Mammary epithelial cell (primary cell): ENCODE measurements at regions of chr20 and their contacts with region 1.

Region 1: DNA sequence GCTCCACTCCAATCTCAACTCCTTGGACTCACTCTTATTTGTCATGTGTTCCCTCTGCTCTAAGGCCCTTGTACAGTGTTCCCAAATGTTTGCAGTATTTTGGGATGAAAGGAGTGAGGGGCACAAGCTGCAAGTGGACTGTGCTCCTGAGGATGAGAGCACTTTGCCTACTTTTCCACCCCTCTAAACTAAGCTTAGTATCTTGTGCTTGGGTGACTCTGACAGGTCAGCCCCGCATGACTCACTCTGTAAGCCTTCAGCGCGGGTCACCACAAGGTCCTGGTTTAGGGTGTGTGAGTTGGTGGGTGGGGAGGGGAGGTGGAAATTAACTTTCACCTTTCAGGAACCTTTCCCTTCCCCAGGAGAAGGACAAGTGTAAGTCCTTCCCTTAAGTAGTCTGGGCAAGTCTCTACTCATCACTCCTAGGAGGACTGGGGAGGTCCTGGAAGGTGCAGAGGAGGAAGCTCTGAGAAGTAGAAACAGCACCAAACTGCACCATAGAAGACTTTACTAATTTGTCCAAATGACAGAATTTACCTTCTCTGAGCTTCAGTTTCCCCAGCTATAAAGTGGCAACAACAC is 68.8 kb upstream of the EPB41L1 start:
- DNase-seq: peak; percentile 92
- H3K4me3 ChIP-seq: peak overlapping the region in 1 of 3 experiments; percentile 16
- H3K27ac ChIP-seq: peak overlapping the region; percentile 92
- H3K4me1 ChIP-seq: peaks cover 40% of the 10 kb centered on the region
- H3K27me3 ChIP-seq: no peaks in the 10 kb centered on the region
- CTCF ChIP-seq: no peak

Region 2: GRCh38 chr20:35981969-35982368 is 103.8 kb before region 1 on chr20:
- CTCF ChIA-PET with region 1: no interaction called
- dilution Hi-C with region 1: loop called (anchors 5 kb)
- in situ Hi-C with region 1: no loop called
- intact Hi-C with region 1: no loop called
- DNase-seq: no peak
- H3K4me3 ChIP-seq: no peak overlapping the region
- H3K27ac ChIP-seq: no peak overlapping the region
- H3K4me1 ChIP-seq: no peaks in the 10 kb centered on the region
- H3K27me3 ChIP-seq: no peaks in the 10 kb centered on the region
- CTCF ChIP-seq: no peak

Region 3: DNA sequence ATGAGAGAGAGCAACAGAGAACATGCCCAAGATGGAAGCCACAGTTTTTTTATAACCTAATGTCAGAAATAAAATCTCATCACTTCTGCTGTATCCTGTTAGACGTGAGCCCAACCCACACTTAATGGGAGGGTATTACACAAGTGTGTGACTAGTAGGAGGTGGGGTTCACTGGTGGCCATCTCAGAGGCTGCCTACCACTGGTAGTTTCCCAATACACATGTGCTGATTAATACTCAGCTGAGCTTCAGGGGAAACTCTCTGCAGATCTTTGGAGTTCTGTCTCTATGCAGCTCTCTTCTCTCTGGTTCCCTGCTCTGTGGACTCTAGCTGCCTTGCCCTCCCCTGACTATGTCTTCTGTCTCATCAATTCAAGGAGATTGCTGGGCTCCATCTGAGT is 81.7 kb before region 1 on chr20:
- CTCF ChIA-PET with region 1: no interaction called
- dilution Hi-C with region 1: no loop called
- in situ Hi-C with region 1: no loop called
- intact Hi-C with region 1: no loop called
- DNase-seq: peak; percentile 60
- H3K4me3 ChIP-seq: no peak overlapping the region
- H3K27ac ChIP-seq: no peak overlapping the region
- H3K4me1 ChIP-seq: no peaks in the 10 kb centered on the region
- H3K27me3 ChIP-seq: no peaks in the 10 kb centered on the region
- CTCF ChIP-seq: no peak

Region 4: DNA sequence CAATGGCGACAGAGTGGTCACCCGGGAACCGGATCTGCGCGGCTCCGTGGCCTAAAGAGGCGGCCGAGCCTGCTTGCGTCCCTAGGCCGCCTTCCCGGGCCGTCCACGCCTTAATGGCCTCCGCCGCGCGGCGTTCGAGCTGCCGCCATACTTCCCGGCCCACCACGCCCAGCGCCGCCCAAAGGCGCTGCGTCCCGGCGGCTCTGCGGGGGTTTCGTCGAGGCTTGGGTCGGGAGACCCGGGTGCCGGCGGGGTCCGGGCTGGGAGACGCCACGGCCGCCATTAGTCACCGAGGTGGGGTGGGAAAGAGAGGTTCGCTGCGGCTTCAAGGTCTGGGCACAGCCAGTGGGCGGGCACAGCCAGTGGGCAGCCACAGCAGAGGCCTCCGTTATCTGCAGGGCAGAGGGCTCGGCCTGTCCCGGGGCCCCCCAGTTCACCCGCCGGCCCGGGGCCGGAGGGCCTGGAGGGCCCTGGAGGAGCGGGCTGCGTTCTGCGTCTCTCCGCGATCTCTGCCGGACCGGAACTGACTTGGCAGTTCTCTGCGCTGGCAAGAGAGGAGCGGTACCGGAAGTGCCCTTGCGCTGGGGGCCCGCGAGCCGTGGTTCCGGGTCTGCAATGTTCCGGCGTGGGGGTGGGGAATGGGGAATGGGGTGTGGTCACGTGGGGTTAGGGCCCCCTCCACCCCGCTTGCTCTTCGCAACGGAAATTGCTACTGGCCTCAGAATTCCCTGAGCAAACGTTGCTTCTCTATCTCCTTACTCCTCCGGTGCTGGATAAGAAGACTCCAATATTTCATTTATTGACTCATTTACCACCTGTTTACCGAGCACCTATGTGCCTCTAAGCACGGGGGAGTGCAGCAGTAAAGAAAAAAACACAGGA is 35.1 kb before region 1 on chr20:
- CTCF ChIA-PET with region 1: no interaction called
- dilution Hi-C with region 1: loop called (anchors 5 kb)
- in situ Hi-C with region 1: no loop called
- intact Hi-C with region 1: loop called (anchors 2 kb)
- DNase-seq: peak; percentile 76
- H3K4me3 ChIP-seq: peak overlapping the region; percentile 74 to 93 (median 86)
- H3K27ac ChIP-seq: peak overlapping the region; percentile 87
- H3K4me1 ChIP-seq: peaks cover 15% of the 10 kb centered on the region
- H3K27me3 ChIP-seq: no peaks in the 10 kb centered on the region
- CTCF ChIP-seq: no peak

Region 5: DNA sequence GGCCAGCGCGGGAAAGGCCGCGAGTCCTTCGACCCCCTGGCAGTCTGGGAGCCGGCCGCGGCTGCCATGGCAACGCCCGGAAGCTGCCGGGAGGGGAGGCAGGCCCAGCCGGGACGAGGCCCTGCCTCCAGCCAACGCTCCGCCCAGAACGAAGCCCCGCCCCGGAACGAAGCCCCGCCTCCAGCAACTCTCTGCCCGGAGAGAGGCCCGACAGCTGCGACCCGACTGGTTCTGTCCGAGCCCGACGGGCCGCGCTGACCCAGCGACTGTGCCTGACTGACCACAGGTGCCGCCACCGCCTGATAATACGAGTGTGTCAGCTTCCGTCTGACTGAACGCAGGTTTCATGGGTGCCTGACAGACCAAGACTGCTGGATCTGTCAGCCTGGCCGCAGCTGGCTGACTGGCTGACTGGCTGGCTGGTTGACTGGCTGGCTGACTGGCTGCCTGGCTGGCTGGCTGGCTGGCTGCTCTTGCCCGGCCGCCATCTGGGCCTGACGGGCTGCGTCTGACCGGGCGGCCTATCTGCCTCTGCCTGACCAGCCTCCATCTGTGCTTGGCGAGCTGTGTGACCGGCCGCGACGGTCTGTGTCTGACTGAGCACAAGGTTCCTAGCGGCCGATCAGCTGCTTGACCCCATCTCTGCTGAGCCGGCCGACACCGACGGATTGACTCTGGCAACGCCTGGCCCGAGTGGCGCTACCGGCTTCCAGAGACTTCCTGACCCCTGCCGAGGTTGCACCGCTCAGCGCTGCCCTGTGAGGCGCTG is 20.9 kb before region 1 on chr20:
- CTCF ChIA-PET with region 1: no interaction called
- dilution Hi-C with region 1: no loop called
- in situ Hi-C with region 1: no loop called
- intact Hi-C with region 1: loop called (anchors 2 kb)
- DNase-seq: peak; percentile 85
- H3K4me3 ChIP-seq: peak overlapping the region; percentile 59 to 80 (median 65)
- H3K27ac ChIP-seq: peak overlapping the region; percentile 73
- H3K4me1 ChIP-seq: peaks cover 36% of the 10 kb centered on the region
- H3K27me3 ChIP-seq: no peaks in the 10 kb centered on the region
- CTCF ChIP-seq: no peak

Region 6: GRCh38 chr20:36128463-36129159 is 42.8 kb after region 1 on chr20:
- CTCF ChIA-PET with region 1: no interaction called
- dilution Hi-C with region 1: no loop called
- in situ Hi-C with region 1: no loop called
- intact Hi-C with region 1: no loop called
- DNase-seq: peak; percentile 46
- H3K4me3 ChIP-seq: no peak overlapping the region
- H3K27ac ChIP-seq: no peak overlapping the region
- H3K4me1 ChIP-seq: peaks cover 9% of the 10 kb centered on the region
- H3K27me3 ChIP-seq: no peaks in the 10 kb centered on the region
- CTCF ChIP-seq: no peak

Region 7: DNA sequence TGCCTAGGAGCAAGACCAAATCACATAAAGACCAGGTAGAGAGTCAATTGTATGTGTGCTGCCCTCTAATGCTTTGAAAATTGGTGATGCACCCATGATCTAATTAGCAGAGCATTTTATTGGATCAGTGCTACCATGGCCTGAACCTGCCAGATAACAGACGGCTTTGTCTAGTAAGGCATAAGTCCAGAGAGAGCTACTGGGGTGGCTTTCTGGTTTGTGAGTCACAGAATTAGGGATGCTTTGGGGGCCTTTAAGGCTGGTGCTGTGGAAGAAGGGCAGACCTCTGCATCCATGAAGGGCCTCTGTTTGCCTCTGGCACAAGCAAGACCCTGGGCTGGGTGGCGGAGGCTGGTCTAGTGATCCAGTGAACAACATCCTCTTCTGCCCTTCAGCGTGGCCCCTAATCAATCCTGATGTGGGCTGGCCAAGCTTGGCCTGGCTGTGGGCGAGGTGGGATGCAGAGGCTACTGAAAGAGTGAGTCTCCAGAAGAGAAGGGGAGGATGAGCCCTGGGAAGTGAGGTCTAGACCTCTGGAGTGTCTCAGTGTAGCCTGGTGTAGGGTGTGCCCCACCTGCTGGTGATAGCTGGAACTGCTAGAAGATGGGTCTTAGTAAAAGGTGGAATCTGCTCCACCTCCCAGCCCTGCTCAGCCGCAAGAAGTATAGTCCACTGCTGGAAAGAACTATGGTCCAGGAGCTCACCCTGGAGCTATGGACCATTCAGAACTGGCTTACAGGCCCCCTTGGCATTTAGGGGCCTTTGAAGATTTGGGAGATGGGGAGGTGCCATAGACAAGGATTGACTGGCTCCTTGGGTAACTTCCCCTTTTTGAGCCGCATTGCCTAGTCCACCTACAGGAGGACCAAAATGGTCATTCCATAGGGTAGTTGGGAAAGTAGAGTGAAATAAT is 113.8 kb after region 1 on chr20:
- CTCF ChIA-PET with region 1: interaction called, 10 read pairs
- dilution Hi-C with region 1: no loop called
- in situ Hi-C with region 1: no loop called
- intact Hi-C with region 1: no loop called
- DNase-seq: peak; percentile 54
- H3K4me3 ChIP-seq: no peak overlapping the region
- H3K27ac ChIP-seq: no peak overlapping the region
- H3K4me1 ChIP-seq: no peaks in the 10 kb centered on the region
- H3K27me3 ChIP-seq: no peaks in the 10 kb centered on the region
- CTCF ChIP-seq: peak; percentile 92 to 97